GM18951 (cell line): ENCODE measurements at regions of chr3 and their contacts with region 1.

Region 1: DNA sequence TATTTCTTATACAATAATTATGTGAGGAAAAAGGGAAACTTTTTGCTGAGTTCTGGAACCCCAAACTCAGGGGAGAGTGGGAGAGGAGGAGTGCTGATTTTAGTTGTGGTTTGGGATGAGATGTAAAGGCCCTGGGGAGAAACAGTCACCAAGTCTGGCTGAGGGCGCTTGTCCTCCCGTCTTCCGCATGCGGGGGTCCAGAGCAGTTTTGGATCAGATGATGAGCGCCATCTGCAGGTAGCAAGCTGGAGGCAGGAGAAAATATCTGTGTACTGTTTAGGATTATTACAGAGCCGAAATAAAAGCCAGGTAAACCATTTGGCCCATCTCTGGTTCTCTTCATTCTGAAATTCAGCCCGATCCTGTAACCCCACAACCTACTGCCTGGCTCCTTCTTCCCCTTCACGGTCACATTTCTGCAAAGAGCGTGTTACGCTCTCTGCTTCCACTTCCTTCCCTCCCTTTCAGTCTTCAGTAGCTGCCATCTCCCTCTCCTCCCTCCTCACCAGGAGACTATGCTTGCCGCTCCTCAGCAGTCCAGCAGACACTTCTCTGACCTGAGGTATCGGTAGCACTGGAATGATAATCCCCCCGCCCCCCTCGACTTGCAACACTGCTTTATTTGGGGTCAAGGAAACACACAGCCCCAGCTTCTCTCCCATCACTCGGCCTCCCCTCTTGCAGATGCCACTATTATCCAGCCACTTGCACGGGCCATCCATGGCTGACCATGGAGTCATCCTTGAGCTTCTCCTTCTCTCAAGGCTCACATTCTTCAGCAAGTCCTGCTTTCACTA is 1.4 kb upstream of the PARP14 start:
- POLR2A ChIP-seq: peak; percentile 44

Region 2: GRCh38 chr3:122322095-122323075 is 356.9 kb before region 1 on chr3:
- in situ Hi-C with region 1: no loop called
- POLR2A ChIP-seq: no peak

Region 3: DNA sequence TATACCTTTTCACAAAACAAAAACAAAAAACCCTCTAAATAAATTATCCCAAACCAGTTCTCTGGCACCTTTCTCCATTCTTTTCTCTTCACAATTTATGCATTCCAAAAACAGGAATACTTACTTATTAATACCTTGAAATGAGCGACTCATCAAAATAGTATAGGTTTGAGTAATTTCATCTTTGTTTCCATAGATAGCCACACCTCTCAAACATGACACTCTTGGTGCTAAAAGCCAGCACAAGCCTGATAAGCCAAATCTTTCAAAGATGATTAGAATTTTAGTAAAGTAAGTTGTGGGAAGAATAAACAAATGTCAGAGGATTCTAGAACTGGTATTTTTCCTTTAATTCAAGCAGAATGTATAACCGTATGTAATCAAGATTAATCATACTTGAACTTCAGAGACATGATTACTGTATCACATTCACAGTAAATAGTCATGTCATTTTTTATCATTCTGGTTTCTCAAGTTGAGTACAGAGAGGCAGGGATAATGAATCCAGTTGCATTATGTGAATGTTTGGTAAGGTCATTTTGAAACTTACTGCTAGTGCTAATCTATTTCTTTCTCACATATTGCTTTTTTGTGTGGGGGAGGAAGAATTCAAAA is 251.3 kb before region 1 on chr3:
- in situ Hi-C with region 1: loop called (anchors 25 kb)
- POLR2A ChIP-seq: no peak

Region 4: GRCh38 chr3:122553171-122553570 is 126.1 kb before region 1 on chr3:
- in situ Hi-C with region 1: loop called (anchors 5 kb)
- POLR2A ChIP-seq: no peak